ENCODE measurements at regions of chr3 and their contacts with region 1.

Region 1: GRCh38 chr3:131026321-131027178 is at the starts of genes ASTE1 and NEK11:
- DNase-seq: peak; percentile 88
- CTCF ChIP-seq: no peak

Region 2: DNA sequence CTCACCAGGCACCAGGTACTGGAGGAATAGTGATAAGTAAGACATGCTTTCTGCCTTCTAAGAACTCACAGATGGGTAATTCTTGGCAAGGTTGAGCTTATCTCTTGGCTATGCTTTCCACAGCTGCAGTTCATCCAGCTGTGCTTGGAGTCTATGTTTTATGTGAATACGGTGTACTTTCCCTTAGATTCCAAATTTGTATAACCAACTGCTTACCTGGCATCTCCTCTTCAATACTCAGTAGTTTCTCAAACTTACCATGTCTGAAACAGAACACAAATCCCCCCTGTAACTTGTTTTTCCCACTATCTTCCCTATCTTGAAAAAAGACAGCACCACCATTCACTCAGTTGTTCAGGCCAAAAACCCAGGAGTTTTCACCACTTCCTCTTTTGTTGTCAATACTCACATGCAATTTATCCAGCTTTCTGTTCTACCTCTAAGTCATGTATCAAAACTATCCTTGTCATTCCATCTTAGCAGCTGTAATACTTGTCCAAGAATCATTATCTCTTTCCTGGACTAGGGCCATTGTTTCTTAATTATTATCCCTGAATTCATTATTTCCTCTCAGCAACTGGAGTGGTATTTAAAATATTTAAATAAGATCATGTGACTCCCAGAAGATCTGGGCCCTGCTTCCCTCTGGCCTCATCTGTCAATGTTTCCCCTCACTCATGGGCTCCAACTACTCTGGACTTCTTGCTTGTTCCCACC is 648.4 kb before region 1 on chr3:
- in situ Hi-C with region 1: no loop called
- DNase-seq: no peak
- CTCF ChIP-seq: no peak

Region 3: GRCh38 chr3:130971208-130971607 is 55.3 kb before region 1 on chr3:
- in situ Hi-C with region 1: no loop called
- DNase-seq: no peak
- CTCF ChIP-seq: no peak

Region 4: GRCh38 chr3:131526801-131527347 is 500.3 kb after region 1 on chr3:
- in situ Hi-C with region 1: loop called (anchors 25 kb)
- DNase-seq: no peak
- CTCF ChIP-seq: peak; percentile 18

Region 5: GRCh38 chr3:132006605-132007204 is 980.2 kb after region 1 on chr3:
- in situ Hi-C with region 1: loop called (anchors 25 kb)
- DNase-seq: no peak
- CTCF ChIP-seq: peak; percentile 56

Region 6: DNA sequence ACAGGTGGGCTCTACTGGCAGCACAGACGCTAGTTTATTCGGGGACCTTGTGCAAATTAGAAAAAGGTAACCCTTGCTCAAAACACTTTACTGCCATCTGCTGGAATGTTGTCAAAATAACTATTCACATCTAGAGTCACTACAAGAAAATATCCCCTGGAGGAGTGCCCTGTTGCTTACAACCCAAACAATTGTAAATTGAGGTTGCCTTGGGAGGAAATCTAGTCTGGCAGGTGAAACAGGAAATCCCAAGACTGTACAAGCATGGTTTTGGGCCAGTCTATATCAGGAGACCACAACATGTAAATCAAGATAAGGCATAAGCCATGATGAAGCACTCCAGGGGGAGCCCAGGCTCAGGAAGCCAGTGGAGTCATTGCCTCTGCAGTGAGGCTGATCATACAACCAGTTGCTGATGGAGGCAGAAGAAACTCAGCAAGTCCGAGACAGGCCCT is 1153.8 kb after region 1 on chr3:
- in situ Hi-C with region 1: loop called (anchors 25 kb)
- DNase-seq: peak; percentile 23
- CTCF ChIP-seq: peak; percentile 49

Region 7: DNA sequence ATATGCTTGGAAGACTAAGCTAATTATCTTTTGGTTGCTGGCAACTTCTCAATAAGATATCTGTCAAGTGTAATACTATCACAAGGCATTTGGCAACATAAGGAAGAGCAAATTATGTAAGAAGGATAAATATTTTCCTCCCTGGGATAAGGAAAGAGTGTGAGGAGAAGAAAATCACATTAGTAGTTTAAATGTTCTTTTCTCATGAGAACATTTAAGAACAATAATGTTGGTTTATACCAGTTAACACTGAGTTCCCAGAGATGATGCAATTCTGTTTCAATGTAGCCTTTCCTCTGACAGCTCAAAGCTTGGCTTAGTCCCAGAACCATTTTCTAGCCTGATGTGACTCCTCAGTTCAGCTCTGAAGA is 1761.7 kb after region 1 on chr3:
- in situ Hi-C with region 1: no loop called
- DNase-seq: no peak
- CTCF ChIP-seq: no peak